ENCODE measurements at regions of chr1 and their contacts with region 1.

Region 1: GRCh38 chr1:2322065-2322571 is 69.2 kb downstream of the MORN1 start:
- DNase-seq: no peak
- H3K4me3 ChIP-seq: peak overlapping the region in 1 of 2 donors; percentile 3
- H3K27ac ChIP-seq: peak overlapping the region; percentile 66 to 74
- H3K4me1 ChIP-seq: peaks cover 23% of the 10 kb centered on the region
- H3K27me3 ChIP-seq: no peaks in the 10 kb centered on the region
- CTCF ChIP-seq: no peak
- POLR2A ChIP-seq: no peak

Region 2: DNA sequence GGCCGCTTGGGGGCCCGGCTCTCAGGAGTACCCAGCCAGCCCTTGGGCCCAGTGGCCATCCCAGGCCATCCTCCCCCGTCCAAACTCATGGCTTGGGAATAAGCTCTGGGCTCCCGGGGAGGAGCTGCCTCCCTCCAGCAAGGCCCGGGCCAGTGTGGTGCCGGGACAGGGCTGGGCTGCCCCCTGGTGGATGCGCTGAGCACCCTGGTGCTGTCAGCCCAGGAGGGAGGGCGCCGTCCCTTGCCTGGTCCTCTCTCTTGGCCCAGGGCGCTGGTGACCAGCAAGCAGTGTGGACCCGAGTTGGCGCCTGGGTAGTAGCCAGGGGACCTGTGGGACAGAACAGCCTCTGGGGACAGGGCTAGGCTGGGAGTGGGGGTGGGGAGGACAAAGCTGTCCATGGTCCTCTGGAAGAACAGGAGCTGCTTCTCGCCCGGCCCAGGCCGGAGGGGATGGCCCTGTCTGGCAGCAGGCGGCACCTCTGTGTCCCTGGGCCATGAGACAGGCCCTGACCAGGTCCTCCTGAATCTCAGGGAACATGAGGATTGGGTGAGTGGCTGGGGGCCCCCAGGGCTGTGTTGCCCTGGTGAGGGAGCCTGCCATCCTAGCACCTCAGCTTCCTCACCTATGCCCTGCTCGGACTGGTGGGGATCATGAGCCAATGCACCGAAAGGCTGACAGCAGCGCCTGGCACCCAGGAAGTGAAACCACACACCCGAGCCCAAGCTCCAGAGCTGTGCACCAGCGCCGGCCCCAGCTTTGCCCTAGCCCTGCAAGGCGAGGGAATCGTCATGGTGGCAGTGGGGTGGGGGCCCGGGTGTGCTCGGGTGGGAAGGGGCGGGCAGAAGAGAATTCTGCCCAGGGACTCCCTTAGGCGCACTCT is 59.9 kb after region 1 on chr1:
- intact Hi-C with region 1: loop called (anchors 2 kb)
- DNase-seq: peak; percentile 69
- H3K4me3 ChIP-seq: no peak overlapping the region
- H3K27ac ChIP-seq: no peak overlapping the region
- H3K4me1 ChIP-seq: no peaks in the 10 kb centered on the region
- H3K27me3 ChIP-seq: no peaks in the 10 kb centered on the region
- CTCF ChIP-seq: peak; percentile 92 to 98 (median 96)
- POLR2A ChIP-seq: no peak

Measured in prostate gland (tissue), 2 donors.